Activated naive CD4-positive, alpha-beta T cell treated with anti-CD3 and anti-CD28 coated beads for 36 hours (primary cell): ENCODE measurements at regions of chr13 and their contacts with region 1.

Region 1: GRCh38 chr13:78658635-78659449 is at the start of gene OBI1:
- DNase-seq: peak; percentile 90
- H3K4me3 Mint-ChIP-seq: peak within 1 kb of the TSS; percentile 100
- H3K27ac Mint-ChIP-seq: peak within 1 kb of the TSS; percentile 96
- H3K4me1 Mint-ChIP-seq: peaks cover 35% of the 10 kb centered on the region
- H3K27me3 Mint-ChIP-seq: no peaks in the 10 kb centered on the region
- total RNA-seq, gene OBI1: 16.0 to 17.7 TPM

Region 2: GRCh38 chr13:78689011-78689410 is 30.2 kb after region 1 on chr13:
- CTCF ChIA-PET with region 1: no interaction called
- intact Hi-C with region 1: no loop called
- DNase-seq: no peak
- H3K4me3 Mint-ChIP-seq: no peak overlapping the region
- H3K27ac Mint-ChIP-seq: no peak overlapping the region
- H3K4me1 Mint-ChIP-seq: no peaks in the 10 kb centered on the region
- H3K27me3 Mint-ChIP-seq: peaks cover 5% of the 10 kb centered on the region

Region 3: DNA sequence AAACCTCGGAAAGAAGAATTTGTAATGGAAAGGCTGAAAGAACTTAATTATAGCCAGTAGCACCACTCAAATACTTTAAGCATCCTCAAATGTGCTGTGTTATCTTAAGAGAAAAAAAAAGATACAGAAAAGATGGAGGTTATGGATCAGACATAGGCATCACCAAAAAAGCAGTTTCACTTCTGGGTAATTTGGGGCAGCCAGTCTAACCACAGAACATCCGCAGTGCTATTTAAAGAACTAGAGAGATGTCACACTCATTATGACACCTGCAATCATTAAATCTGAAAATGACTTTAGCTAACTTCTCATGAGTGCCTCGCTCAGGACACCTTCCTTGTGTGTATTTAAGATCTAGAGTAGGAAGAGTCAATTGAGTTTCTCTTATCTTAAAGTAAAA is 535.4 kb after region 1 on chr13:
- CTCF ChIA-PET with region 1: no interaction called
- intact Hi-C with region 1: loop called (anchors 5 kb)
- DNase-seq: peak; percentile 76
- H3K4me3 Mint-ChIP-seq: no peak overlapping the region
- H3K27ac Mint-ChIP-seq: no peak overlapping the region
- H3K4me1 Mint-ChIP-seq: peaks cover 40% of the 10 kb centered on the region
- H3K27me3 Mint-ChIP-seq: no peaks in the 10 kb centered on the region

Region 4: GRCh38 chr13:79320433-79320832 is 661.6 kb after region 1 on chr13:
- CTCF ChIA-PET with region 1: no interaction called
- intact Hi-C with region 1: loop called (anchors 10 kb)
- DNase-seq: no peak
- H3K4me3 Mint-ChIP-seq: no peak overlapping the region
- H3K27ac Mint-ChIP-seq: no peak overlapping the region
- H3K4me1 Mint-ChIP-seq: peaks cover 15% of the 10 kb centered on the region
- H3K27me3 Mint-ChIP-seq: no peaks in the 10 kb centered on the region